Activated CD4-positive, alpha-beta memory T cell treated with anti-CD3 and anti-CD28 coated beads for 36 hours (primary cell): ENCODE measurements at regions of chr9 and their contacts with region 1.

Region 1: GRCh38 chr9:34376596-34377403 is at the start of gene MYORG:
- DNase-seq: peak; percentile 99
- H3K4me3 Mint-ChIP-seq: peak within 1 kb of the TSS; percentile 78
- H3K27ac Mint-ChIP-seq: no peak within 1 kb of the TSS
- H3K4me1 Mint-ChIP-seq: peaks cover 30% of the 10 kb centered on the region
- H3K27me3 Mint-ChIP-seq: no peaks in the 10 kb centered on the region
- total RNA-seq, gene MYORG: 1.9 to 2.9 TPM

Region 2: GRCh38 chr9:34084562-34084961 is 292.2 kb before region 1 on chr9:
- CTCF ChIA-PET with region 1: no interaction called
- POLR2A ChIA-PET with region 1: no interaction called
- intact Hi-C with region 1: loop called (anchors 2 kb)
- DNase-seq: no peak
- H3K4me3 Mint-ChIP-seq: no peak overlapping the region
- H3K27ac Mint-ChIP-seq: no peak overlapping the region
- H3K4me1 Mint-ChIP-seq: peaks cover 13% of the 10 kb centered on the region
- H3K27me3 Mint-ChIP-seq: no peaks in the 10 kb centered on the region

Region 3: GRCh38 chr9:34178520-34179212 is 198.1 kb before region 1 on chr9 and contains the start of gene UBAP1:
- CTCF ChIA-PET with region 1: no interaction called
- POLR2A ChIA-PET with region 1: interaction called, 3 read pairs
- intact Hi-C with region 1: loop called (anchors 1 kb)
- DNase-seq: peak; percentile 98
- H3K4me3 Mint-ChIP-seq: peak within 1 kb of the TSS; percentile 90
- H3K27ac Mint-ChIP-seq: peak within 1 kb of the TSS; percentile 96
- H3K4me1 Mint-ChIP-seq: peaks cover 12% of the 10 kb centered on the region
- H3K27me3 Mint-ChIP-seq: no peaks in the 10 kb centered on the region
- total RNA-seq, gene UBAP1: 30.5 to 32.0 TPM

Region 4: GRCh38 chr9:34328987-34329832 is 47.6 kb before region 1 on chr9 and contains the starts of genes KIF24 and NUDT2:
- CTCF ChIA-PET with region 1: interaction called, 68 read pairs
- POLR2A ChIA-PET with region 1: interaction called, 8 read pairs
- intact Hi-C with region 1: loop called (anchors 1 kb)
- DNase-seq: peak; percentile 98
- H3K4me3 Mint-ChIP-seq: peak within 1 kb of the TSS; percentile 97
- H3K27ac Mint-ChIP-seq: peak within 1 kb of the TSS; percentile 94
- H3K4me1 Mint-ChIP-seq: peaks cover 30% of the 10 kb centered on the region
- H3K27me3 Mint-ChIP-seq: no peaks in the 10 kb centered on the region
- total RNA-seq, gene KIF24: 5.6 to 5.7 TPM
- total RNA-seq, gene NUDT2: 42.4 to 43.3 TPM

Region 5: DNA sequence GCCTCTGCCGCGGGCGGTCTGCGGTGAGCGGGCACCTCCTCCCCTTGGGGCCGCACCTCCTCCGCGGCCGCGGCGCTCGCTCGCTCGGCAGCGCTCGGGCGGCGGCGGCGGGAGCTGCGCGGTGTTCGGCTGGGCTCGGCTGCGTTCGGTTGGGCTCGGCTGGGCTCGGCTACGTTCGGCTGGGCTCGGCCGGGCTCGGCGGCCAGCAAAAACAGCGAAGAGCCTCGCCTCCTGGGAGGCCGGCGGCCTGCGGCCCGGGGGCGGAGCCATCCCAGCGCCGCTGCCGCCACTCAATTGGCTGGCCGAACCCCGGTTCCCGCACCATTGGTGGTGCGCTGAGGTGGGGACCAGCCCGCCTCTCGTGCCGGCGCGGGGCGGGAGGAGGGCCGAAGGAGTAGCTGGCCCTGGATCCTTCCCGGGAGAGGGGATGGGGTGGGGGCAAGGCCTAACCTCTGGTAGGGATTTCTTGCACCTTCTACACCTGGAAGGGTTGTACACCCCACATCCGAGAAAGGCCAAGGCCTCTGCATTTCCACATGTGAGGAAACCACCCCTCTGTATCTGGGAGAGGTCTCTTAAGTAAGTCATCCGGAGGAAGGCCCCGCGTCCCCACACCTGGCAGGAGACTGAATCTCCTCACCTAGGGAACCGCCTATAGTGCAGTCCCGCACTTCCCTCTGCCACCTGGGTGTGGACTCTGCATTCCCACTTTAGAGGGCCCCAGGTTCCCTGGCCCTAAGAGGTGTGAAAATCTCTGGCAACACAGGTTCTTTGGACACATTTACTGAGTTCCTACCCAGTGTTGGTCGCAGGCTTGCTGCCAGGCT is 146.4 kb after region 1 on chr9 and contains the start of gene ENHO:
- CTCF ChIA-PET with region 1: interaction called, 3 read pairs
- POLR2A ChIA-PET with region 1: no interaction called
- intact Hi-C with region 1: loop called (anchors 2 kb)
- DNase-seq: peak; percentile 94
- H3K4me3 Mint-ChIP-seq: peak within 1 kb of the TSS; percentile 48
- H3K27ac Mint-ChIP-seq: no peak within 1 kb of the TSS
- H3K4me1 Mint-ChIP-seq: peaks cover 16% of the 10 kb centered on the region
- H3K27me3 Mint-ChIP-seq: peaks cover 5% of the 10 kb centered on the region
- total RNA-seq, gene ENHO: 0.26 to 0.36 TPM